SK-N-SH (cell line): ENCODE measurements at regions of chr11 and their contacts with region 1.

Region 1: DNA sequence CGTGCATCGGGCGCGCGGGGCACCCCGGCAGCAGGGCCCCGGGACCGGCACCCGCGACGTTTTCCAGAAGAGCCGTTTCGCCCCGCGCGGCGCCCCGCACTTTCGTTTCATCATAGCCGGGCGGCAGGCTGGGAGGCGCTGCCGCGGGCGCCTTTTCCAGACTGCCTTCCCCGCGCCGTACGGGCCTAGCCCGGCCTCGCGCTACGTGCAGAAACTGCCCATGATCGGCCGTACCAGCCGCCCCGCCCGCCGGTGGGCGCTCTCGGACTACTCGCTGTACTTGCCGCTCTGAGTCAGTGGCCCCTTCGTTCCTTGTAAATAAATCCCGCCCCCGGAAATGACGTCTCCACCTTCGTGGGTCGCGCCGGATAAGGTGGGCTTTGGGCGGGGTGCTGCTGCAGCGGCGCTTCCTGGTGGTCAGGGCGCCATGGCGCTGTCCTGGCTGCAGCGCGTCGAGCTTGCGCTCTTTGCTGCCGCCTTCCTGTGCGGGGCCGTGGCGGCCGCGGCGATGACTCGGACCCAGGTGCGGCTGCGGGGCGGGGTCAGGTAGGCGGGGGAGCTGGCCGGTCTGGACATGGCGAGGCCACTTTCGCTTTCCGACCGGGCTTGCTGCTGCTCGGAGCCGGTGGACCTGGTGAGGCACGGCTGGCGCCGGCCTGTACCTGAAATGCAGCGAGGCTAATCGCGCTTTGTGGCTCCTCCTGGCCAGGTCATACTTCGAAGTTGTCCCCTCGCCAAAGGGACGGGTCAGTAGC is at the start of gene TMEM179B:
- DNase-seq: peak; percentile 97
- H3K4me3 ChIP-seq: peak within 1 kb of the TSS; percentile 76 to 87
- H3K27ac ChIP-seq: peak within 1 kb of the TSS; percentile 65 to 89
- H3K4me1 ChIP-seq: peaks cover 6 to 26% of the 10 kb centered on the region in 2 experiments
- H3K27me3 ChIP-seq: no peaks in the 10 kb centered on the region
- CTCF ChIP-seq: peak; percentile 49
- EP300 ChIP-seq: peak in 1 of 2 experiments; percentile 15; a peak in 1 of 4 replicates
- RAD21 ChIP-seq: peak; percentile 27; the same call in 1 of the 2 replicates
- polyA plus RNA-seq, gene TMEM179B: 69.6 and 73.3 TPM in 2 replicates

Region 2: GRCh38 chr11:62753736-62754603 is 33.2 kb before region 1 on chr11 and contains the start of gene ZBTB3:
- CTCF ChIA-PET with region 1: interaction called, 18 read pairs
- POLR2A ChIA-PET with region 1: interaction called, 13 read pairs
- DNase-seq: peak; percentile 90
- H3K4me3 ChIP-seq: peak within 1 kb of the TSS; percentile 66 to 69
- H3K27ac ChIP-seq: peak within 1 kb of the TSS; percentile 85 to 95
- H3K4me1 ChIP-seq: peaks cover 6 to 11% of the 10 kb centered on the region in 2 experiments; a peak in 3 of 4 replicates
- H3K27me3 ChIP-seq: no peaks in the 10 kb centered on the region
- CTCF ChIP-seq: no peak
- EP300 ChIP-seq: no peak
- RAD21 ChIP-seq: no peak
- polyA plus RNA-seq, gene ZBTB3: 2.1 and 3.3 TPM in 2 replicates

Region 3: GRCh38 chr11:62805076-62805892 is 18.1 kb after region 1 on chr11 and contains the start of gene NXF1:
- CTCF ChIA-PET with region 1: interaction called, 12 read pairs
- POLR2A ChIA-PET with region 1: interaction called, 5 read pairs
- DNase-seq: peak; percentile 99
- H3K4me3 ChIP-seq: peak within 1 kb of the TSS; percentile 91 to 94
- H3K27ac ChIP-seq: peak within 1 kb of the TSS; percentile 75 to 83
- H3K4me1 ChIP-seq: peaks cover 8 to 18% of the 10 kb centered on the region in 2 experiments
- H3K27me3 ChIP-seq: no peaks in the 10 kb centered on the region
- CTCF ChIP-seq: 0 out of 2 replicates have a peak, but pooled peaks have one; percentile 14
- EP300 ChIP-seq: no peak
- RAD21 ChIP-seq: no peak
- polyA plus RNA-seq, gene NXF1: 47.6 and 59.7 TPM in 2 replicates

Region 4: GRCh38 chr11:62831520-62832335 is 44.5 kb after region 1 on chr11 and contains the start of gene STX5:
- CTCF ChIA-PET with region 1: interaction called, 24 read pairs
- POLR2A ChIA-PET with region 1: interaction called, 3 read pairs
- DNase-seq: peak; percentile 96
- H3K4me3 ChIP-seq: peak within 1 kb of the TSS; percentile 76 to 99
- H3K27ac ChIP-seq: peak within 1 kb of the TSS; percentile 89 to 93
- H3K4me1 ChIP-seq: peaks cover 0 to 20% of the 10 kb centered on the region in 2 experiments; a peak in 3 of 4 replicates
- H3K27me3 ChIP-seq: no peaks in the 10 kb centered on the region
- CTCF ChIP-seq: no peak
- EP300 ChIP-seq: no peak
- RAD21 ChIP-seq: no peak
- polyA plus RNA-seq, gene STX5: 24.2 and 27.4 TPM in 2 replicates

Region 5: DNA sequence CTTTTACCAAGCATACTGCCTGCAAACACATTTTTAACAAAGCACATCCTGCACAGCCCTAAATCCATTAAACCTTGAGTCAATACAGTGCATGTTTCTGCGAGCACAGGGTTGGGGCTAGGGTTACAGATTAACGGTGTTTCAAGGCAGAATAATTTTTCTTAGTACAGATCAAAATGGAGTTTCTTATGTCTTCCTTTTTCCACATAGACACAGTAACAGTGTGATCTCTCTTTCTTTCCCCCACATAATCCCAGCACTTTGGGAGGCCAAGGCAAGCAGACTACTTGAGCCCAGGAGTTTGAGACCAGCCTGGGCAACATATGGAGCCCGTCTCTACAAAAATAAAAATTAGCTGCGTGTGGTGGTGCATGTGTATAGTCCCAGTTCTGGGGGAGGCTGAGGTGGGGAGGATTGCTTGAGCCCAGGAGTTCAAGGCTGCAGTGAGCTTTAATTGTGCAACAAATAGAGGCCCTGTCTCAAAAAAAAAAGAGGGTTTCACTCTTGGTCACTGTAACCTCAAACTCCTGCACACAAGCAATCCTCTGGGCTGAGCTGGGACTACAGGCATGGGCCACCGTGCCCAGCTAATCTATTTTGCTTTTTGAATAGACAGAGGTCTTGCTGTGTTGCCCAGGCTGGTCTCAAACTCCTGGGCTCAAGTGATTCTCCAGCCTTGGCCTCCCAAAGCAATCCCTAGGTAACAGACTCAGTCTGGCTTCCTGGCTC is 73.8 kb after region 1 on chr11:
- CTCF ChIA-PET with region 1: interaction called, 74 read pairs
- POLR2A ChIA-PET with region 1: interaction called, 30 read pairs
- DNase-seq: no peak
- H3K4me3 ChIP-seq: no peak overlapping the region
- H3K27ac ChIP-seq: no peak overlapping the region
- H3K4me1 ChIP-seq: peaks cover 6% of the 10 kb centered on the region in 2 experiments; a peak in 2 of 4 replicates
- H3K27me3 ChIP-seq: no peaks in the 10 kb centered on the region
- CTCF ChIP-seq: no peak
- EP300 ChIP-seq: no peak
- RAD21 ChIP-seq: no peak

Region 6: DNA sequence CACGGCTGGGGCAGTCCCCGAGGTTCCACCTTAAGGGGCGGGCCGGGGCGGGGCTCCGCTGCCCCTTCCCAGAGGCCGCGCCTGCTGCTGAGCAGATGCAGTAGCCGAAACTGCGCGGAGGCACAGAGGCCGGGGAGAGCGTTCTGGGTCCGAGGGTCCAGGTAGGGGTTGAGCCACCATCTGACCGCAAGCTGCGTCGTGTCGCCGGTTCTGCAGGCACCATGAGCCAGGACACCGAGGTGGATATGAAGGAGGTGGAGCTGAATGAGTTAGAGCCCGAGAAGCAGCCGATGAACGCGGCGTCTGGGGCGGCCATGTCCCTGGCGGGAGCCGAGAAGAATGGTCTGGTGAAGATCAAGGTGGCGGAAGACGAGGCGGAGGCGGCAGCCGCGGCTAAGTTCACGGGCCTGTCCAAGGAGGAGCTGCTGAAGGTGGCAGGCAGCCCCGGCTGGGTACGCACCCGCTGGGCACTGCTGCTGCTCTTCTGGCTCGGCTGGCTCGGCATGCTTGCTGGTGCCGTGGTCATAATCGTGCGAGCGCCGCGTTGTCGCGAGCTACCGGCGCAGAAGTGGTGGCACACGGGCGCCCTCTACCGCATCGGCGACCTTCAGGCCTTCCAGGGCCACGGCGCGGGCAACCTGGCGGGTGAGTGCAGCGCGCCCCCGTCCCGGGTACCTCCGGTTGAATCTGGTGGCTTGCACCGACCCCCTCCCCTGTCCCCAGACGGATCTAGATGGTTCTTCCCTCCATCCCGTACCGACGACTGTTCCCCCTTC is 93.8 kb after region 1 on chr11 and contains the start of gene SLC3A2:
- CTCF ChIA-PET with region 1: interaction called, 54 read pairs
- POLR2A ChIA-PET with region 1: interaction called, 7 read pairs
- DNase-seq: peak; percentile 89
- H3K4me3 ChIP-seq: peak within 1 kb of the TSS; percentile 82 to 91
- H3K27ac ChIP-seq: peak within 1 kb of the TSS; percentile 94 to 98
- H3K4me1 ChIP-seq: peaks cover 32 to 44% of the 10 kb centered on the region in 2 experiments
- H3K27me3 ChIP-seq: no peaks in the 10 kb centered on the region
- CTCF ChIP-seq: peak; percentile 67
- EP300 ChIP-seq: no peak
- RAD21 ChIP-seq: peak; percentile 57
- polyA plus RNA-seq, gene SLC3A2: 212 and 308 TPM in 2 replicates